SK-N-SH (cell line): ENCODE measurements at regions of chr16 and their contacts with region 1.

Region 1: DNA sequence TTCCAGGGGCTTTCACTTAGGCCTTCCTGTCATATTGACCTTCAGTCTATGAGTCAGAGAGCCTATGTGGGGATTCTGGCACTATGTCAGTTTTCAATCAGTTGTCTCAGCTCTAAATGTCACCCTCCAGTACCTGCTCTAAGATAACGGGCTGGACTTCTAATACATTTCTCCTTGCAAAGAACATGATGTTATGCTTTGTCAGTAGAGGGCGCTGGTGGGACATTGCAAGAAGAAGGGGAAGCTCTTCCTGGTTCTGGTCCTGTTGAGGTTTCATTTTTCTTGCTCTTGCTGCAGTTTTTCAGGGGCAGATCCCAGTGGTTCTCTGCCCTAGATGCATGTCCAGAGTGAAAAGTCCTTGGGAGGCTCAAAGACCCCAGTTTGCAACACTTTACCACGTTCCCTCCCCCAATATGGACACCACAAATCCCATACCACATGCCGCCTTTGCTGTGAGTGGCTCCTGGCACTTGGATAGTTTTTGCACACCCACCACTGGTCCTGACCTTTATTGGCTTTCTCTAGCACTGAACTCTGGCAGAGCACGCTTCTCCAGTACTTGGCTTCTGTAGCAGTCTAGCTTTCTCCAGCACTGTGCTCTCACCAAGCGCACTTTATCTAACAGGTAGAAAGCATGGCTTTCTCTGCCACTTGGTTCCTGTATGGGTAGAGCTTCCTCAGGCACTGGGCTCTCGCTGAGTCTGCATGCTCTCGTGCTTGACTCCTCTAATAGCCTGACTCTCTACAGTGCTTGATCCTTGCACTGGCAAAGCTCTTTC is 49.0 kb downstream of the BCL7C start:
- DNase-seq: peak; percentile 73
- H3K4me3 ChIP-seq: no peak overlapping the region; a peak in 1 of 4 replicates
- H3K27ac ChIP-seq: no peak overlapping the region
- H3K4me1 ChIP-seq: no peaks in the 10 kb centered on the region; a peak in 1 of 4 replicates
- H3K27me3 ChIP-seq: no peaks in the 10 kb centered on the region
- CTCF ChIP-seq: peak; percentile 83
- EP300 ChIP-seq: no peak
- RAD21 ChIP-seq: peak; percentile 86

Region 2: GRCh38 chr16:30813821-30814189 is 31.1 kb before region 1 on chr16:
- CTCF ChIA-PET with region 1: interaction called, 42 read pairs
- POLR2A ChIA-PET with region 1: no interaction called
- DNase-seq: no peak
- H3K4me3 ChIP-seq: peak overlapping the region; percentile 24 to 72; a peak in 3 of 4 replicates
- H3K27ac ChIP-seq: peak overlapping the region; percentile 24 to 69; a peak in 2 of 4 replicates
- H3K4me1 ChIP-seq: peaks cover 0 to 6% of the 10 kb centered on the region in 2 experiments; a peak in 1 of 4 replicates
- H3K27me3 ChIP-seq: no peaks in the 10 kb centered on the region
- CTCF ChIP-seq: no peak
- EP300 ChIP-seq: no peak
- RAD21 ChIP-seq: no peak

Region 3: DNA sequence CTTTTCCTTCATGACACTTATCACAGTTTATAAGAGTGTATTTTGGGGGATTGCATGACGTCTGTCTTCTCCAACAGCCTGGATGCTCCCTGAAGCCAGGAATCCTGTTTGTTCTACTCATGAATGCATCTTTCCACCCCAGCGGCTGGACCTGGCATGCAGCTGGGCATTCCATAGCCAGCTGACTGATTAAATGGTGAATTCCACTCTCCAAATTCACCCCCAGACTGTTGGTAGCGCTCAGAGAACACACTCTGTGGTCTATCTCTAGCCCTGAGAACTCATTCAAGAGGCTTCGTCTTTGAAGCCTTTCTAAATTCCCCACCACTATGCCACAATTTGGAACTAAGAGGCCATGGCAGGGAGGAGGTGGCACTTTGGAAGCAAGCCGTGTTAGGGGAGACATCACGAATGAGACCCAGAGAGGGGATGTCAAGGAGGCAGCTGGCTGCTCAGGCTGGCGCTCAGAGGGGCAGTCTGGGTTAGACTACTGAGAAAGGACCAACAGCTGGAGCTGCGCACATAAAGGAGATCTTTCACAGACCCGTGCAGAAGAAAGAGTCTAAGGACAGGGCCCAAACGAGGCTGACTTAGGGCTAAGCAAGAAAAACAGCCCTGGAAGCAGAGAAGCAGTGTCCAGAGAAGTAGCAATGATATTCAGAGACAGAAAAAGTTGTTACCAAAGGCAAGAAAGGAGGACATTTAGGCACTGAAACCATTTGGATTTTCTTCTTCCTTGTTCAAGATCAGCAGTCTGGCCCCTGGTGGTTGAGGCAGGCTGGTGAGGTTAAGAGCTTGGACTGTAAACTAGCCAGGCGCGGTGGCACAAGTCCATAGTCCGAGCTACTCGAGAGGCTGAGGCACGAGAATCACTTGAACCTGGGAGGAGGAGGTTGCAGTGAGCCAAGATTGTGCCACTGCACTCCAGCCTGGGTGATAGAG is 15.5 kb before region 1 on chr16:
- CTCF ChIA-PET with region 1: interaction called, 25 read pairs
- POLR2A ChIA-PET with region 1: no interaction called
- DNase-seq: no peak
- H3K4me3 ChIP-seq: no peak overlapping the region
- H3K27ac ChIP-seq: no peak overlapping the region
- H3K4me1 ChIP-seq: no peaks in the 10 kb centered on the region
- H3K27me3 ChIP-seq: no peaks in the 10 kb centered on the region
- CTCF ChIP-seq: no peak
- EP300 ChIP-seq: no peak
- RAD21 ChIP-seq: no peak

Region 4: GRCh38 chr16:30867747-30868146 is 22.9 kb after region 1 on chr16:
- CTCF ChIA-PET with region 1: interaction called, 14 read pairs
- POLR2A ChIA-PET with region 1: no interaction called
- DNase-seq: peak; percentile 34
- H3K4me3 ChIP-seq: peak overlapping the region in 1 of 2 experiments; percentile 16; a peak in 1 of 4 replicates
- H3K27ac ChIP-seq: no peak overlapping the region
- H3K4me1 ChIP-seq: no peaks in the 10 kb centered on the region
- H3K27me3 ChIP-seq: no peaks in the 10 kb centered on the region
- CTCF ChIP-seq: peak; percentile 42
- EP300 ChIP-seq: no peak
- RAD21 ChIP-seq: peak; percentile 19; the same call in 1 of the 2 replicates

Region 5: GRCh38 chr16:30893744-30894539 is 49.1 kb after region 1 on chr16 and contains the start of gene BCL7C:
- CTCF ChIA-PET with region 1: interaction called, 14 read pairs
- POLR2A ChIA-PET with region 1: no interaction called
- DNase-seq: peak; percentile 96
- H3K4me3 ChIP-seq: peak within 1 kb of the TSS; percentile 75 to 88
- H3K27ac ChIP-seq: peak within 1 kb of the TSS; percentile 77 to 99
- H3K4me1 ChIP-seq: peaks cover 12 to 29% of the 10 kb centered on the region in 2 experiments; a peak in 3 of 4 replicates
- H3K27me3 ChIP-seq: no peaks in the 10 kb centered on the region
- CTCF ChIP-seq: peak; percentile 47
- EP300 ChIP-seq: no peak
- RAD21 ChIP-seq: 0 out of 2 replicates have a peak, but pooled peaks have one; percentile 18
- polyA plus RNA-seq, gene BCL7C: 48.5 and 56.3 TPM in 2 replicates

Region 6: DNA sequence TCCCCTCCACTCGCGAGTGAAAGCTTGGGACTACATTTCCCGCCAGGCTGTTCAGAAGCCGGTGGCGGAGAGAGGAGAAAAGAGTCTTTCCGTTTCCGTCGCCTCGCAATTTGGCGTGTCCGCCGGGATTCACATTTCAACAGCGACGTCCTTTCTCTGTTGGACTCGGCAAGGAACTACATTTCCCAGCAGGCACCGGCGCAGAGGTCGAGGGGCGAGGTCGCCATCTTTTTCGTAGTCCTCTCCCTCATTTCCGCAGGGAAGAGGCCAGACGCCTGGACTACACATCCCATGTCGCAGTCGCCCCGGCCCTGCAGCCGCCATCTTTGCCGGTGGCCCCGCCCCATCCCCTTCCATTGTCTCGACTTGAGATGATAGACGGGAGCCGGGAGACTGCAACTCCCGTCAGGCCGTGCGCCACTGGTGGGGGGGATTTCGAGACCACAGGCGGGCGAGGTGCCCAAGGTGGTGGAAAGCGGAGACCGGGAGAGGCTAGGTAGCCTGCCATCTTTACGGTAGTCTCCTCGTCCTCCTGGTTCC is 77.6 kb after region 1 on chr16:
- CTCF ChIA-PET with region 1: interaction called, 48 read pairs
- POLR2A ChIA-PET with region 1: interaction called, 3 read pairs
- DNase-seq: peak; percentile 84
- H3K4me3 ChIP-seq: peak overlapping the region; percentile 80 to 88
- H3K27ac ChIP-seq: peak overlapping the region; percentile 90 to 97
- H3K4me1 ChIP-seq: peaks cover 0 to 21% of the 10 kb centered on the region in 2 experiments; a peak in 1 of 4 replicates
- H3K27me3 ChIP-seq: no peaks in the 10 kb centered on the region
- CTCF ChIP-seq: no peak
- EP300 ChIP-seq: no peak
- RAD21 ChIP-seq: no peak

Region 7: GRCh38 chr16:30941600-30942425 is 97.0 kb after region 1 on chr16:
- CTCF ChIA-PET with region 1: interaction called, 23 read pairs
- POLR2A ChIA-PET with region 1: interaction called, 4 read pairs
- DNase-seq: peak; percentile 90
- H3K4me3 ChIP-seq: no peak overlapping the region; a peak in 1 of 4 replicates
- H3K27ac ChIP-seq: no peak overlapping the region; a peak in 2 of 4 replicates
- H3K4me1 ChIP-seq: peaks cover 0 to 7% of the 10 kb centered on the region in 2 experiments; a peak in 1 of 4 replicates
- H3K27me3 ChIP-seq: no peaks in the 10 kb centered on the region
- CTCF ChIP-seq: peak; percentile 83
- EP300 ChIP-seq: no peak
- RAD21 ChIP-seq: peak; percentile 70

Region 8: DNA sequence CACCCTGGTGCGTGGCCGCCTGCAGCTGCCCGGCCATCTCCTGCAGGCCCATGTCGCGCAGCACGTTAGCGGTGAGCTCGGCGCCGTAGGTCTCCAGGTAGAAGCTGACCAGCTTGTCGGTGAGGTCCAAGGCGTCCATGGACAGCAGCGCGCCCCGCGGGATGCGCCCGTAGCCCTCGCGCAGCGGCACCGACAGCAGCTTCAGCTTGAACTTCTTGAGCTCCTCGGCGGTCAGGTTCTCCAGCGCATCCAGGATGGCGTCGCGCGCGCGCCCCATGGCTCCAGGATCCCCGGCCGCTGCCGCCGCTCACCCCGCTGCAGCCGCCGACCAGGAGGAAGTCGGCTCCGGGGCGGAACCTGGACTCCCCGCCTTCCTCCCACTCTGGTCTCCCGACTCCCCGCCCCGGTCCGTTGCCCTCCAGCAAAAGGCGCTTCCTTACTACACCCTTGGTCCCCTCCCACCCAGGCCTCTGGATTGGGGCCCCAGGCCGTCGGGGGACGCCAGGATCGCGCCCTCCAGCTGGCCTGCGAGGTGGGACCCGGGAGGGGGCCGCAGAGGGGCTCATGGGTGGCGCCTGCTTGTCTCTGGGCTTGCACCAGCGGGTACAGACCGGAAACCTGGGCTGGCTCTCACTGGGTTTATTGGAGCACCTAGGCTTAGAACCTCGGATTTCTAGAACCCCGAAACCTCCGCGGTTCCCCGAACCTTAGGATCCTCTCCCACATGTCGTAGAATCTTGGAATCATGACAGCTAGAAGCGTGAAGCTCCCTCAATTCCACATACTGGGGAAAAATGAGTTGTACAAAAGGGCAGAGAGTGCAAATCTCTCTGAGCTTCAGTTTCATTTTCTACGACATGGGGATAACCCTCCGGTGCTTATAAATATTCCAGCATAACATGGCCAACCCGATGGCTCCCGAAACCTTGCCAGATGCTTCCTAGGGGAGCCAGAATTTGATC is 357.8 kb after region 1 on chr16 and contains the start of gene PYCARD:
- CTCF ChIA-PET with region 1: no interaction called
- POLR2A ChIA-PET with region 1: no interaction called
- DNase-seq: peak; percentile 60
- H3K4me3 ChIP-seq: no peak within 1 kb of the TSS
- H3K27ac ChIP-seq: no peak within 1 kb of the TSS
- H3K4me1 ChIP-seq: no peaks in the 10 kb centered on the region
- H3K27me3 ChIP-seq: peaks cover 13% of the 10 kb centered on the region
- CTCF ChIP-seq: no peak
- EP300 ChIP-seq: no peak
- RAD21 ChIP-seq: no peak
- polyA plus RNA-seq, gene PYCARD: 0.28 and 0.42 TPM in 2 replicates